ENCODE measurements at regions of chr3 and their contacts with region 1.

Region 1: GRCh38 chr3:28667646-28668621 is 319.3 kb upstream of the AZI2 start:
- DNase-seq: peak; percentile 51
- ATAC-seq: peak; percentile 99
- H3K4me3 ChIP-seq: no peak overlapping the region
- H3K27ac ChIP-seq: no peak overlapping the region
- H3K4me1 ChIP-seq: no peaks in the 10 kb centered on the region
- H3K27me3 ChIP-seq: peaks cover 19% of the 10 kb centered on the region; the same call in 1 of the 2 replicates
- CTCF ChIP-seq: peak; percentile 47 to 85 (median 81); a peak in 5 of 6 replicates
- POLR2A ChIP-seq: no peak
- RAD21 ChIP-seq: peak; percentile 55

Region 2: GRCh38 chr3:28682121-28682520 is 14.2 kb after region 1 on chr3:
- CTCF ChIA-PET with region 1: interaction called, 13 read pairs
- POLR2A ChIA-PET with region 1: no interaction called
- RAD21 ChIA-PET with region 1: no interaction called
- intact Hi-C with region 1: no loop called
- DNase-seq: no peak
- ATAC-seq: no peak
- H3K4me3 ChIP-seq: no peak overlapping the region
- H3K27ac ChIP-seq: no peak overlapping the region
- H3K4me1 ChIP-seq: no peaks in the 10 kb centered on the region
- H3K27me3 ChIP-seq: 0 out of 2 replicates have a peak, but pooled peaks cover 4% of the 10 kb centered on the region
- CTCF ChIP-seq: no peak
- POLR2A ChIP-seq: no peak
- RAD21 ChIP-seq: no peak

Region 3: GRCh38 chr3:28726840-28727239 is 58.9 kb after region 1 on chr3:
- CTCF ChIA-PET with region 1: interaction called, 17 read pairs
- POLR2A ChIA-PET with region 1: no interaction called
- RAD21 ChIA-PET with region 1: no interaction called
- intact Hi-C with region 1: loop called (anchors 2 kb)
- DNase-seq: peak; percentile 44
- ATAC-seq: peak; percentile 88
- H3K4me3 ChIP-seq: no peak overlapping the region
- H3K27ac ChIP-seq: no peak overlapping the region
- H3K4me1 ChIP-seq: no peaks in the 10 kb centered on the region
- H3K27me3 ChIP-seq: no peaks in the 10 kb centered on the region
- CTCF ChIP-seq: peak; percentile 39 to 76 (median 75); a peak in 5 of 6 replicates
- POLR2A ChIP-seq: no peak
- RAD21 ChIP-seq: peak; percentile 56

Region 4: GRCh38 chr3:29764603-29765254 is 1096.8 kb after region 1 on chr3:
- CTCF ChIA-PET with region 1: interaction called, 7 read pairs
- POLR2A ChIA-PET with region 1: no interaction called
- RAD21 ChIA-PET with region 1: no interaction called
- intact Hi-C with region 1: loop called (anchors 2 kb)
- DNase-seq: peak; percentile 16
- ATAC-seq: no peak; the same call in 1 of the 2 replicates
- H3K4me3 ChIP-seq: no peak overlapping the region
- H3K27ac ChIP-seq: no peak overlapping the region
- H3K4me1 ChIP-seq: no peaks in the 10 kb centered on the region
- H3K27me3 ChIP-seq: no peaks in the 10 kb centered on the region
- CTCF ChIP-seq: peak; percentile 22 to 51 (median 35); a peak in 4 of 6 replicates
- POLR2A ChIP-seq: no peak
- RAD21 ChIP-seq: peak; percentile 63